ENCODE measurements at regions of chr2 and their contacts with region 1.

Region 1: GRCh38 chr2:79860228-79861058 is 347.6 kb downstream of the CTNNA2 start:
- DNase-seq: peak in 22 of 42 donors; percentile 12 to 74 (median 42)

Region 2: GRCh38 chr2:79041032-79041448 is 819.4 kb before region 1 on chr2:
- intact Hi-C with region 1: loop called (anchors 10 kb)
- DNase-seq: peak in 12 of 42 donors; percentile 6 to 43 (median 25)

Region 3: GRCh38 chr2:79223539-79223938 is 636.9 kb before region 1 on chr2:
- intact Hi-C with region 1: loop called (anchors 10 kb)
- DNase-seq: peak in 6 of 42 donors; percentile 5 to 18 (median 8)